CD8-positive, alpha-beta T cell (primary cell): ENCODE measurements at regions of chr9 and their contacts with region 1.

Region 1: GRCh38 chr9:19464764-19465585 is 56.2 kb downstream of the ACER2 start:
- DNase-seq: peak; percentile 44 to 83 (median 71)
- ATAC-seq: peak; percentile 91
- H3K4me3 ChIP-seq: peak overlapping the region; percentile 35 to 56
- H3K4me3 Mint-ChIP-seq: peak overlapping the region; percentile 89
- H3K27ac ChIP-seq: no peak overlapping the region
- H3K27ac Mint-ChIP-seq: no peak overlapping the region
- H3K4me1 ChIP-seq: peaks cover 7% of the 10 kb centered on the region
- H3K4me1 Mint-ChIP-seq: peaks cover 10% of the 10 kb centered on the region
- H3K27me3 ChIP-seq: no peaks in the 10 kb centered on the region
- H3K27me3 Mint-ChIP-seq: peaks cover 2% of the 10 kb centered on the region
- CTCF ChIP-seq: peak; percentile 80

Region 2: DNA sequence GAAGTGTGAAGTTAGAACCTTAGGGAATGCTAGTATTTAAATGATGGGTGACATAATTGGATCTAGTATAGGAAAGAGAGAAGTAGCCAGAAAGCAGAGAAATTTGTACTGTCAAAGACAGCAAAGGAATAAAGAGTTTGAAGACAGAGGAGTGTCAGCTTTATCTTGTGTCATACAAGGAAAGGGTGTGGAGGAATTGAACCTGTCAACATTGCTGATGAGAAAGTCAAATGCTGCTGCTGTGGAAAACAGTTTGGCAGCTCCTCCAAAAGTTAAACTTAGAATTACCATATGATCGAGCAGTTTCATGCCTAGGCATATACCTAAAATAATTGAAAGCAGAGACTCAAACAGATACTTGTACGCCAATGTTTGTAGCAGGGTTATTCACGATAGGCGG is 170.8 kb before region 1 on chr9:
- CTCF ChIA-PET with region 1: no interaction called
- POLR2A ChIA-PET with region 1: no interaction called
- intact Hi-C with region 1: no loop called
- DNase-seq: no peak
- ATAC-seq: no peak
- H3K4me3 ChIP-seq: no peak overlapping the region
- H3K4me3 Mint-ChIP-seq: no peak overlapping the region
- H3K27ac ChIP-seq: no peak overlapping the region
- H3K27ac Mint-ChIP-seq: no peak overlapping the region
- H3K4me1 ChIP-seq: no peaks in the 10 kb centered on the region
- H3K4me1 Mint-ChIP-seq: peaks cover 2% of the 10 kb centered on the region
- H3K27me3 ChIP-seq: no peaks in the 10 kb centered on the region
- H3K27me3 Mint-ChIP-seq: no peaks in the 10 kb centered on the region
- CTCF ChIP-seq: no peak

Region 3: GRCh38 chr9:19441730-19442129 is 23.2 kb before region 1 on chr9:
- CTCF ChIA-PET with region 1: interaction called, 14 read pairs
- POLR2A ChIA-PET with region 1: no interaction called
- intact Hi-C with region 1: no loop called
- DNase-seq: peak in 2 of 9 experiments; percentile 8 to 37
- ATAC-seq: peak; percentile 58
- H3K4me3 ChIP-seq: peak overlapping the region in 1 of 2 experiments; percentile 27
- H3K4me3 Mint-ChIP-seq: peak overlapping the region; percentile 68
- H3K27ac ChIP-seq: peak overlapping the region in 1 of 2 experiments; percentile 37
- H3K27ac Mint-ChIP-seq: peak overlapping the region; percentile 71
- H3K4me1 ChIP-seq: no peaks in the 10 kb centered on the region
- H3K4me1 Mint-ChIP-seq: peaks cover 9% of the 10 kb centered on the region
- H3K27me3 ChIP-seq: no peaks in the 10 kb centered on the region
- H3K27me3 Mint-ChIP-seq: no peaks in the 10 kb centered on the region
- CTCF ChIP-seq: no peak

Region 4: DNA sequence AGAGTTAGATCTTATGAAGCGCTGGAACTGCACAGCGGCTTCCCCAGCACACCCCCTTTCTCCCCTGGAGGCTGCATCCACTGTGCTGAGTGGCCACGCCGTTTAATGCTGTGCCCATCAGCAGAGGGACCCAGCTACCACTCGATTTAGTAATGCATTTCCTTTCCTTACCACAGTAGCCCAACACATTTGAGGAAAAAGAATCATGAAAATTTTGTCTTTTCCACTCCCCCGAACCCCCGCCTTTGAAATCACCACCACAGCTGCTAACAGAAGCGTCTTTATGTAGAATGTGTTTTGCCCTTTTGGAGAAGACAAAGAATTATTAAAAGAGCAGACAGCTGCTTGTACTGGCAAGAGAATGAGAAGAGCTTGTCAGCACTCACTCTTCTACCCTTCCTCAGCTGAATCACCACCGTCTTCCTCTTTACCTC is 17.0 kb after region 1 on chr9:
- CTCF ChIA-PET with region 1: interaction called, 57 read pairs
- POLR2A ChIA-PET with region 1: no interaction called
- intact Hi-C with region 1: no loop called
- DNase-seq: no peak
- ATAC-seq: no peak
- H3K4me3 ChIP-seq: no peak overlapping the region
- H3K4me3 Mint-ChIP-seq: no peak overlapping the region
- H3K27ac ChIP-seq: no peak overlapping the region
- H3K27ac Mint-ChIP-seq: no peak overlapping the region
- H3K4me1 ChIP-seq: no peaks in the 10 kb centered on the region
- H3K4me1 Mint-ChIP-seq: no peaks in the 10 kb centered on the region
- H3K27me3 ChIP-seq: no peaks in the 10 kb centered on the region
- H3K27me3 Mint-ChIP-seq: peaks cover 10% of the 10 kb centered on the region
- CTCF ChIP-seq: no peak

Region 5: GRCh38 chr9:20043035-20043434 is 578.1 kb after region 1 on chr9:
- CTCF ChIA-PET with region 1: no interaction called
- POLR2A ChIA-PET with region 1: no interaction called
- intact Hi-C with region 1: no loop called
- DNase-seq: peak in 2 of 9 experiments; percentile 15 to 44
- ATAC-seq: peak; percentile 69
- H3K4me3 ChIP-seq: peak overlapping the region; percentile 33 to 44
- H3K4me3 Mint-ChIP-seq: peak overlapping the region; percentile 80
- H3K27ac ChIP-seq: peak overlapping the region; percentile 4 to 74
- H3K27ac Mint-ChIP-seq: peak overlapping the region; percentile 84
- H3K4me1 ChIP-seq: peaks cover 22% of the 10 kb centered on the region
- H3K4me1 Mint-ChIP-seq: peaks cover 28% of the 10 kb centered on the region
- H3K27me3 ChIP-seq: no peaks in the 10 kb centered on the region
- H3K27me3 Mint-ChIP-seq: no peaks in the 10 kb centered on the region
- CTCF ChIP-seq: no peak